ENCODE measurements at regions of chr7 and their contacts with region 1.

Region 1: DNA sequence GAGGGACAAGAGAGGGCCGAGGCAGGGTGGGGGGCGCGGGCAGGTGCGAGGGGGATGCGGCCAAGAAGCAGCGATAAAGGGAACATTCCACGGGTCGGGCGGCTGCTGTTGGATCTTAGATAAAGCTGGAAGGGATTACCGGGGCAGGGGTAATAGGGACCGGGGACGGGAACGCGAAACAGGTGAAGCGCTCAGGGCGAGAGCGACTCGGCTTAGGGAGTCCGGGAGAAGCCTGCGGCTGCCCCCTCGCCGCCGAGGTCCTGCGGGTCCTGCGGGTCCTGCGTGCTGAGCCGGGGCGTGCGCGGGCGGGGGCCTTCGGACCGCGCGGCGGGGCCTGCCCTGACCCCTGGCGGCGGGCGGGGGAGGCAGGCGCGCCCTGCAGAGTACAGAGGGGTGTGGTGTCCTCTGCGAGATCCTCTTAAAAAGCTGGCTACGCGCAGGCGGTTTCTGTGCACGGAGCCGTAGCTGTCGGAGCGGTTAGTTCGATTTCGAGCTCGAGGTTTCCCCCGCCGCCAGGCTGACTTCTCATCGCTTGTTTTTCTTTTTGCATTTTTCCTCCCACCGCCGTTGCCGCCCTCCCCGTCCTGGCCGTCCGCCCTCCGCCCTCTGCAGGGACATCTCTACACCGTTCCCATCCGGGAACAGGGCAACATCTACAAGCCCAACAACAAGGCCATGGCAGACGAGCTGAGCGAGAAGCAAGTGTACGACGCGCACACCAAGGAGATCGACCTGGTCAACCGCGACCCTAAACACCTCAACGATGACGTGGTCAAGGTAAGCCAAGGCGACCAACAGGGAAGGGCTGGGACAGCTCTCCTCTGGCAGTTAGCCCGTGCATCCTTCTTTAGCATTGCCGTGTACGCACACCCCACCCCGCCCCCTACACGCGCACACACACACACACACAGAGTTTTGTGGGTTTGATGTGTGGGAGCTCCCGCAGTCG is 1.4 kb downstream of the CAV1 start:
- DNase-seq: peak; percentile 85
- H3K4me3 Mint-ChIP-seq: peak overlapping the region; percentile 99
- H3K27ac Mint-ChIP-seq: peak overlapping the region; percentile 90
- H3K4me1 Mint-ChIP-seq: peaks cover 39% of the 10 kb centered on the region
- H3K27me3 Mint-ChIP-seq: no peaks in the 10 kb centered on the region
- CTCF ChIP-seq: peak; percentile 81

Region 2: GRCh38 chr7:116258734-116259133 is 267.5 kb before region 1 on chr7:
- CTCF ChIA-PET with region 1: interaction called, 108 read pairs
- POLR2A ChIA-PET with region 1: interaction called, 128 read pairs
- intact Hi-C with region 1: loop called (anchors 1 kb)
- DNase-seq: peak; percentile 71
- H3K4me3 Mint-ChIP-seq: no peak overlapping the region
- H3K27ac Mint-ChIP-seq: peak overlapping the region; percentile 96
- H3K4me1 Mint-ChIP-seq: peaks cover 39% of the 10 kb centered on the region
- H3K27me3 Mint-ChIP-seq: no peaks in the 10 kb centered on the region
- CTCF ChIP-seq: peak; percentile 76

Region 3: GRCh38 chr7:116354546-116355408 is 171.4 kb before region 1 on chr7:
- CTCF ChIA-PET with region 1: interaction called, 6 read pairs
- POLR2A ChIA-PET with region 1: interaction called, 10 read pairs
- intact Hi-C with region 1: loop called (anchors 1 kb)
- DNase-seq: peak; percentile 91
- H3K4me3 Mint-ChIP-seq: peak overlapping the region; percentile 69
- H3K27ac Mint-ChIP-seq: peak overlapping the region; percentile 98
- H3K4me1 Mint-ChIP-seq: peaks cover 42% of the 10 kb centered on the region
- H3K27me3 Mint-ChIP-seq: no peaks in the 10 kb centered on the region
- CTCF ChIP-seq: no peak

Region 4: GRCh38 chr7:116407165-116407564 is 119.0 kb before region 1 on chr7:
- CTCF ChIA-PET with region 1: no interaction called
- POLR2A ChIA-PET with region 1: no interaction called
- intact Hi-C with region 1: no loop called
- DNase-seq: no peak
- H3K4me3 Mint-ChIP-seq: no peak overlapping the region
- H3K27ac Mint-ChIP-seq: no peak overlapping the region
- H3K4me1 Mint-ChIP-seq: no peaks in the 10 kb centered on the region
- H3K27me3 Mint-ChIP-seq: no peaks in the 10 kb centered on the region
- CTCF ChIP-seq: no peak

Region 5: GRCh38 chr7:116511552-116512519 is 14.4 kb before region 1 on chr7:
- CTCF ChIA-PET with region 1: interaction called, 14 read pairs
- POLR2A ChIA-PET with region 1: interaction called, 241 read pairs
- intact Hi-C with region 1: loop called (anchors 1 kb)
- DNase-seq: peak; percentile 82
- H3K4me3 Mint-ChIP-seq: peak overlapping the region; percentile 76
- H3K27ac Mint-ChIP-seq: peak overlapping the region; percentile 82
- H3K4me1 Mint-ChIP-seq: peaks cover 35% of the 10 kb centered on the region
- H3K27me3 Mint-ChIP-seq: no peaks in the 10 kb centered on the region
- CTCF ChIP-seq: no peak

Region 6: DNA sequence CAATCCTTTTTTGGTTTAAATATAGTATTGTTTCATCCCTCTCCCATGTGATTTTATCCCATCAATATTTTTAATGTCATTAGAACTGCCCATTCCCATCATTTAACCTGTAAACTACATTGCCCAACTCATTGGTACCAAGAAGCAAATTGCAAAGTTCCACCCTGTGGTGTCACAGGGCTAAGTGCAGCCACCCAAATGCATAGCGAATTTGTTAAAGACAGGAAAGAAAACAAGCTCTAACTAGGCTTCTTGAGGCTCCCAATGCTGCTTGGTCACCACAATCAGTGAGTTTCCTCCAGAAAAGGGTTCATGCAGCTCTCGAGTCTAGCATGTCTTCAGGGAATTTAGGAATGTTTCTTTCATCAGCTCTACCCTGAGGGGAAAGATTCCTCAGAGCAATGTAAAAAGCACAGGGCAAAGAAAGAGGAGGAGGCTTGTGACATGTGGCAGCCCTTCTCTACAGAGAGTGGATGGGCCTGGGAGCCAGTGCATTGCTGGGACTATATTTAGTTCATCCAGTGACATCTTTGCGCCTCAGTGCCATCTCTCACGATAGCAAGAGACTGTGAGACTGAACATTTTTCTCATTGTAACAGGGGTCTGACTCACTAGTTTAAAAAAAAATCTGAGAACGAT is 56.7 kb after region 1 on chr7:
- CTCF ChIA-PET with region 1: interaction called, 14 read pairs
- POLR2A ChIA-PET with region 1: interaction called, 11 read pairs
- intact Hi-C with region 1: no loop called
- DNase-seq: peak; percentile 38
- H3K4me3 Mint-ChIP-seq: no peak overlapping the region
- H3K27ac Mint-ChIP-seq: peak overlapping the region; percentile 62
- H3K4me1 Mint-ChIP-seq: peaks cover 17% of the 10 kb centered on the region
- H3K27me3 Mint-ChIP-seq: no peaks in the 10 kb centered on the region
- CTCF ChIP-seq: no peak

Region 7: DNA sequence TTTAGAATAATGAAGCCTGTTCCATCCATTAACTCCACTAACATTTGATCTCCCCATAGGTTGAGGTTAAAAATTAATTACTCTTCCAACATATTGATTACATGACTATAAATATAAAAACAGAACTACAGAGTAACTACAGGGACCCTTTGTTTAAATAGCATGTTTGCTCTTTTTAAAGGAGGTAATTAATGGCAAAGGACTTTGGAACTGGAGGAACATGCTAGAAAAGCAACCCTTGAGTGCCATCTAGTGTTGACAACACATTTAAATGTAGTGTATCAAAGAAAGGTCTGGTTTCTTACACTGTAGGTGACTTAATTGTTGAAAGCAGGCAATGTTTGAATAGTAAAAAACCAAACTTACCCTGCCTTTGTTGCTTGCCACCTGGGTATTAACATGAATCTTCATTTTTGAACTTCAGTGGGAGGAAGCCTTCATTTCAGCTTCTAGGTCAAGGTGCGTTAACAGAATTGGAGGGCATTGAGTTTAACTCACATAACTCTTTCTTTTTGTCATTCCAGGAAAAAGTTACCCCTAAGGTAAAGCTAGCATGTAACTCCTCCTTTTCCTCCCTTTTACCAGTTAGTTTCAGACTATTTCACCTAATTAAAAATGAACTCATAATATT is 283.6 kb after region 1 on chr7:
- CTCF ChIA-PET with region 1: interaction called, 3 read pairs
- POLR2A ChIA-PET with region 1: interaction called, 7 read pairs
- intact Hi-C with region 1: loop called (anchors 5 kb)
- DNase-seq: peak; percentile 77
- H3K4me3 Mint-ChIP-seq: no peak overlapping the region
- H3K27ac Mint-ChIP-seq: peak overlapping the region; percentile 75
- H3K4me1 Mint-ChIP-seq: peaks cover 19% of the 10 kb centered on the region
- H3K27me3 Mint-ChIP-seq: no peaks in the 10 kb centered on the region
- CTCF ChIP-seq: peak; percentile 64

Region 8: GRCh38 chr7:116984917-116985316 is 458.7 kb after region 1 on chr7:
- CTCF ChIA-PET with region 1: no interaction called
- POLR2A ChIA-PET with region 1: no interaction called
- intact Hi-C with region 1: no loop called
- DNase-seq: peak; percentile 49
- H3K4me3 Mint-ChIP-seq: no peak overlapping the region
- H3K27ac Mint-ChIP-seq: no peak overlapping the region
- H3K4me1 Mint-ChIP-seq: peaks cover 5% of the 10 kb centered on the region
- H3K27me3 Mint-ChIP-seq: no peaks in the 10 kb centered on the region
- CTCF ChIP-seq: peak; percentile 62

Region 9: DNA sequence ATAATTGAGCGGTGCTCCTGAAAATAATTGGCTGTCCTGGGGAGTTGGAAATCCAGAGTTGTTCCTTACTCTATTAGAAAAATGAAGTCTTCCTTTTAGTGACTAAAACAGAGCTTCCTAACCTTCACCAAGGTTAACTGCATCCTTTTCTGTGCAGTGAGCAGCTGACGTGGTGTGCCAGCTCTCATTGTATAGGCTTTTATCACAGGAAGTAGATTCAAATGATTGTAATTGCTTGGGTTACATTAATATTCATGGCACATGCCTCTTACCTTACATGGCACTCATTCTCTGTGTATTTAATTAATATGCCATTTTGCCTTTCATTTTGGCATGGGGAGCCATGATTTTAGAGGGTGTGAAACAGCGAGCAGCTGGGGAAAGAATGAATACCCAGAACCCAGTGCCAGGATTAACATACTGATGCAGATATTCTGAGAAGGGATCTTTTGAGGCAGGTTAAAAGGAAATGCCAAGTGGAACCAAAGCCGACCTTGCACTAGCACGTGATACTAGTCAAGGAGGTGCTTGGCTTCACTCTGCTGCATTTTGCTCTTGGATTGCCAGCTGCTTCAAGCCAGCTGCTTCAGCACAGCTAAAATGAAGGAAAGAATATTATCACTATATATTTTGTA is 542.4 kb after region 1 on chr7:
- CTCF ChIA-PET with region 1: no interaction called
- POLR2A ChIA-PET with region 1: no interaction called
- intact Hi-C with region 1: no loop called
- DNase-seq: no peak
- H3K4me3 Mint-ChIP-seq: no peak overlapping the region
- H3K27ac Mint-ChIP-seq: no peak overlapping the region
- H3K4me1 Mint-ChIP-seq: peaks cover 10% of the 10 kb centered on the region
- H3K27me3 Mint-ChIP-seq: no peaks in the 10 kb centered on the region
- CTCF ChIP-seq: no peak